Activated B cell treated with CpG ODN at 0.5 μM for 24 hours (primary cell): ENCODE measurements at regions of chr4 and their contacts with region 1.

Region 1: DNA sequence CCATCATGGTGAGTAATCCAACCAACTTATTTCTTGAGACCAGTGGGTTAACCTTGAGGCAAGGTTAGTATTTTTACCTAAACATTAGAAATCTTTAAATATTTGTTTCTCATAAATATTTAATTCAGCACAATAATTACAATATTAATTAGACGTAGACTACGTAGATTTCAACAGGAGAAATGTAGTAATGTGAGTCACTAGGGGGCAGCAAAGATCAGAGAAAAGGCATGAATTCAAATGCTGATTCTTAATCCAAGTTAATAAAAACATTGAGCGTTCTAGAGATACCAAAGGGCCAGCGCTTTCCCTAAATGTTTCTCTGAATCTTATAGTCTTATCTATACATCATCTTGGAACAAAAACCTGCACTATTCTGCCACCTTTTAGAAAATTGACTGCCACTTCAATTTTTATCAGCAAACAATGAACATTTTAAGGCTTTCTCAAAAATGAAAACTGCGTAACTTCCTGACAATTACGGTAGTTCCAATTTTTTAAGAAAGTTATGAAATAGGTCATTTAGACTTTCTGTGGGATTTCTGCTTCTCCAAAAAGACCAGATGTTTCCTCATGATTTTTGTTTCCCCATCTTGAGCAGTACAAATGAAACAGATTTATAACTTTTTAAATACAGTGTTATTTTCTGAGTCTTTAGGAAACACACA is 180.7 kb downstream of the GASK1B start:
- DNase-seq: no peak
- ATAC-seq: no peak
- H3K4me3 Mint-ChIP-seq: no peak overlapping the region
- H3K27ac Mint-ChIP-seq: no peak overlapping the region
- H3K4me1 Mint-ChIP-seq: no peaks in the 10 kb centered on the region
- H3K27me3 Mint-ChIP-seq: peaks cover 2% of the 10 kb centered on the region
- CTCF ChIP-seq: no peak

Region 2: GRCh38 chr4:157961229-157961990 is 30.8 kb before region 1 on chr4:
- CTCF ChIA-PET with region 1: no interaction called
- POLR2A ChIA-PET with region 1: no interaction called
- intact Hi-C with region 1: no loop called
- DNase-seq: no peak
- ATAC-seq: no peak
- H3K4me3 Mint-ChIP-seq: no peak overlapping the region
- H3K27ac Mint-ChIP-seq: no peak overlapping the region
- H3K4me1 Mint-ChIP-seq: no peaks in the 10 kb centered on the region
- H3K27me3 Mint-ChIP-seq: no peaks in the 10 kb centered on the region
- CTCF ChIP-seq: no peak

Region 3: DNA sequence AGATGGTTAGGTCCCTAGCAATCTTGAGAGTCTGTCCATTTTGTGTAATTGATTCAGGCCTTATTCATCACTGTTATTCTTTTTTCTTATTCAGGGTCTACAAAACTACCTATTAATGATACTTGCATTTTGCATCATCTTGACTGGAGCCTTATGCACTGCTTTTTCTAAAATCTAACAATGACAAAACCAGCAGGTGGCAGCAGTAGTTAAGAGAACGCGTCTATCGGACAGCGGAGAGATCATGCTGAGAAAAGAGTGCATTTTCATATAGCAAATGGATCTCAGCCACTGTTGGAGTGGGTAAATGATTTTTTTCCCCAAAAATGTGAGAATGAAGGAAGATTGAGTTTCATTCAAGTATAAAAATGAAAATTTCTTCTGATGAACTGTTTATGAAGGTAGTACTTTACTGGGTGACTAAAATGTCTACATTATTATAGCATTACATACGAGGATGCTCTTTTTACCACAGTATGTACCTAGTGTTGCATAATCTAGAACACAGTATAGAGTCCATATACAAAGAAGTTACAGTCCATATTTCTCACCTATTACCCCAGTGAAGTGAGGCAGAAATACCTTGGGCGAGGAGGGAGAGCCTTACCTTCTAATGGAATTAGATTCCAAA is 261.3 kb after region 1 on chr4:
- CTCF ChIA-PET with region 1: no interaction called
- POLR2A ChIA-PET with region 1: no interaction called
- intact Hi-C with region 1: loop called (anchors 2 kb)
- DNase-seq: no peak
- ATAC-seq: peak; percentile 42
- H3K4me3 Mint-ChIP-seq: no peak overlapping the region
- H3K27ac Mint-ChIP-seq: no peak overlapping the region
- H3K4me1 Mint-ChIP-seq: peaks cover 5% of the 10 kb centered on the region
- H3K27me3 Mint-ChIP-seq: peaks cover 12% of the 10 kb centered on the region
- CTCF ChIP-seq: no peak

Region 4: GRCh38 chr4:159201168-159201567 is 1209.0 kb after region 1 on chr4:
- CTCF ChIA-PET with region 1: no interaction called
- POLR2A ChIA-PET with region 1: no interaction called
- intact Hi-C with region 1: loop called (anchors 5 kb)
- DNase-seq: no peak
- ATAC-seq: no peak
- H3K4me3 Mint-ChIP-seq: no peak overlapping the region
- H3K27ac Mint-ChIP-seq: no peak overlapping the region
- H3K4me1 Mint-ChIP-seq: peaks cover 18% of the 10 kb centered on the region
- H3K27me3 Mint-ChIP-seq: no peaks in the 10 kb centered on the region
- CTCF ChIP-seq: no peak

Region 5: GRCh38 chr4:159446266-159446976 is 1454.2 kb after region 1 on chr4:
- CTCF ChIA-PET with region 1: no interaction called
- POLR2A ChIA-PET with region 1: no interaction called
- intact Hi-C with region 1: loop called (anchors 2 kb)
- DNase-seq: no peak
- ATAC-seq: peak; percentile 52
- H3K4me3 Mint-ChIP-seq: no peak overlapping the region
- H3K27ac Mint-ChIP-seq: no peak overlapping the region
- H3K4me1 Mint-ChIP-seq: no peaks in the 10 kb centered on the region
- H3K27me3 Mint-ChIP-seq: peaks cover 12% of the 10 kb centered on the region
- CTCF ChIP-seq: peak; percentile 17